Activated CD4-positive, alpha-beta memory T cell treated with anti-CD3 and anti-CD28 coated beads for 36 hours (primary cell): ENCODE measurements at regions of chr20 and their contacts with region 1.

Region 1: DNA sequence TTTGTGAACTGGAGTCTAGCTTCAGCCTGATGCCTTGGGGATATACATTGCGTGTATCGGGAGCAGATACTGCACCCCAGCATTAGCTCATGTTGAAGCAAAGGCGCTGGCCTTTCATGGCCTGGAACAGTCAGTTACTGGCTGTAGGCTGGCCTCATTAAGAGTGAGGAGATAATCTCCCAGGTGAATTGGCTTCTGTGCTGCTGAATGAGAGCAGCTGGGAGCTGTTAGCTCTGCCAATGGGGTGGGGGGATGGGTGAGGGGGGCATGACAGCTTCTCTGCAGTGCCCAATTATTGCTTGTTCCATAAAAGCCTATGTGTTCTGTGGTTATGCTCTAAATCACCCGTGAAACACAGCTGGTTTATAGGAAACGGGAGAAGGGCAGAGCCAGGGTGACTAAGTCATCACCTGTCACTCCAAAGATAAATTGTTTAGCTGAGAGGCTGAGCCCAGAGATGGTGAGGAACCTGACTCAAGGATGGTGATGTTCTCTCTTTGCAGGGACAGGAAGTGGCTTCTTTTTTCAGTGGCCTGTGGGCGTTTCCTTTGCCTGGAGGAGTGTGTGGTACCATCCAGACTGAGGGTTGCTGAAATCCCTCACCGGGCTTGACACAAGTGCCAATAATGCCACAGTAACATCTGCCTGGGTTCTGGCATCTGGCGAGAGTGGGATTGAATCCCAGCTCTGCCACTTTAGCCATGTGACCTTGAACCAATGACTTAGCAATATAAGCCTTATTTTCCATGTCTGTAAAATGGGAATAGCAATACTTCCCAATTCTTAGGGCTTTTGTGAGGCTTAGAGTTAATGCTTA is 170.8 kb downstream of the BCAS1 start:
- DNase-seq: peak; percentile 92
- H3K4me3 Mint-ChIP-seq: no peak overlapping the region
- H3K27ac Mint-ChIP-seq: peak overlapping the region; percentile 77
- H3K4me1 Mint-ChIP-seq: peaks cover 45% of the 10 kb centered on the region
- H3K27me3 Mint-ChIP-seq: no peaks in the 10 kb centered on the region

Region 2: DNA sequence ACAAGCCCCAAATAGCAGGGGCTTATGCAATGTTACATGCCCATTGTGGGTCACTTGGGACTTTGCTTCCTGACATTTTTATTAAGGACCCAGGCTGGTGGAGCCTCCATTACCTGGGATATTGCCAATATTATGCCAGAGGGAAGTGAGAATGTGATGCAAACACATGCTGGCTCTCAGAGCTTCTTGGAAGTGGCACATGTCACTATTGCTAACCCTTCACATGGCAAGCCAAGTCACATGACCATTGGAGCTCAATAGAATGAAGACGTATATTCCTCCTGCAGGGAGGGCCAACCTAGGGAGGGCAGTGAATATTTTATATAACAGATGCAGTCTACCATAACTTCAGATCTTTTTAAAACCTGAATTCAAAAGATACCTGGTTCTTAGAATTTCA is 1567.3 kb before region 1 on chr20:
- CTCF ChIA-PET with region 1: no interaction called
- POLR2A ChIA-PET with region 1: no interaction called
- intact Hi-C with region 1: no loop called
- DNase-seq: no peak
- H3K4me3 Mint-ChIP-seq: no peak overlapping the region
- H3K27ac Mint-ChIP-seq: no peak overlapping the region
- H3K4me1 Mint-ChIP-seq: no peaks in the 10 kb centered on the region
- H3K27me3 Mint-ChIP-seq: peaks cover 2% of the 10 kb centered on the region

Region 3: DNA sequence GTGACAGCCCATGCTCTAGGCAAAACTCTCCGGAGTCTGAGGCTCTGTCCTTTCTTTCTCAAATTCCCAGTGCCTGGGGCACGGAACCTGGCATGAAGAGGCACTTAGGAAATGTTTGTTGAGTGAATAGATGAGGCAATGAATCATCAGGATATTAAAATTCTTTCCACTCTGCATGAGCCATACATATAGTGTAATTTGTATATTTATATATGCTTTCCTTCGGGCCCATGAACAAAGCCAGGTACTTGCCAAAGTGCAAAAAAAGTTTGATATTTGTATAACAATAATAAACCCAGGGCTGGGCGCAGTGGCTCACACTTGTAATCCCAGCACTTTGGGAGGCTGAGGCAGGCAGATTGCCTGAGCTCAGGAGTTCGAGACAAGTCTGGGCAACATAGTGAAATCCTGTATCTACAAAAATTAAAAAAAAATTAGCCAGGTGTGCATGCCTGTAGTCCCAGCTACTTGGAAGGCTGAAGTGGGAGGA is 93.6 kb before region 1 on chr20:
- CTCF ChIA-PET with region 1: no interaction called
- POLR2A ChIA-PET with region 1: no interaction called
- intact Hi-C with region 1: no loop called
- DNase-seq: no peak
- H3K4me3 Mint-ChIP-seq: no peak overlapping the region
- H3K27ac Mint-ChIP-seq: no peak overlapping the region
- H3K4me1 Mint-ChIP-seq: no peaks in the 10 kb centered on the region
- H3K27me3 Mint-ChIP-seq: no peaks in the 10 kb centered on the region

Region 4: GRCh38 chr20:53934421-53935343 is 35.1 kb after region 1 on chr20:
- CTCF ChIA-PET with region 1: interaction called, 4 read pairs
- POLR2A ChIA-PET with region 1: no interaction called
- intact Hi-C with region 1: loop called (anchors 2 kb)
- DNase-seq: peak; percentile 44
- H3K4me3 Mint-ChIP-seq: peak overlapping the region; percentile 16
- H3K27ac Mint-ChIP-seq: peak overlapping the region; percentile 49
- H3K4me1 Mint-ChIP-seq: peaks cover 44% of the 10 kb centered on the region
- H3K27me3 Mint-ChIP-seq: no peaks in the 10 kb centered on the region

Region 5: GRCh38 chr20:54173653-54174456 is 274.3 kb after region 1 on chr20 and contains the start of gene CYP24A1:
- CTCF ChIA-PET with region 1: no interaction called
- POLR2A ChIA-PET with region 1: no interaction called
- intact Hi-C with region 1: no loop called
- DNase-seq: peak; percentile 16
- H3K4me3 Mint-ChIP-seq: peak within 1 kb of the TSS; percentile 55
- H3K27ac Mint-ChIP-seq: peak within 1 kb of the TSS; percentile 13
- H3K4me1 Mint-ChIP-seq: peaks cover 22% of the 10 kb centered on the region
- H3K27me3 Mint-ChIP-seq: peaks cover 59% of the 10 kb centered on the region
- total RNA-seq, gene CYP24A1: 0.57 to 0.92 TPM

Region 6: GRCh38 chr20:55140631-55141030 is 1241.1 kb after region 1 on chr20:
- CTCF ChIA-PET with region 1: no interaction called
- POLR2A ChIA-PET with region 1: no interaction called
- intact Hi-C with region 1: no loop called
- DNase-seq: no peak
- H3K4me3 Mint-ChIP-seq: no peak overlapping the region
- H3K27ac Mint-ChIP-seq: no peak overlapping the region
- H3K4me1 Mint-ChIP-seq: no peaks in the 10 kb centered on the region
- H3K27me3 Mint-ChIP-seq: no peaks in the 10 kb centered on the region